Breast epithelium (tissue), 4 donors: ENCODE measurements at regions of chr18 and their contacts with region 1.

Region 1: DNA sequence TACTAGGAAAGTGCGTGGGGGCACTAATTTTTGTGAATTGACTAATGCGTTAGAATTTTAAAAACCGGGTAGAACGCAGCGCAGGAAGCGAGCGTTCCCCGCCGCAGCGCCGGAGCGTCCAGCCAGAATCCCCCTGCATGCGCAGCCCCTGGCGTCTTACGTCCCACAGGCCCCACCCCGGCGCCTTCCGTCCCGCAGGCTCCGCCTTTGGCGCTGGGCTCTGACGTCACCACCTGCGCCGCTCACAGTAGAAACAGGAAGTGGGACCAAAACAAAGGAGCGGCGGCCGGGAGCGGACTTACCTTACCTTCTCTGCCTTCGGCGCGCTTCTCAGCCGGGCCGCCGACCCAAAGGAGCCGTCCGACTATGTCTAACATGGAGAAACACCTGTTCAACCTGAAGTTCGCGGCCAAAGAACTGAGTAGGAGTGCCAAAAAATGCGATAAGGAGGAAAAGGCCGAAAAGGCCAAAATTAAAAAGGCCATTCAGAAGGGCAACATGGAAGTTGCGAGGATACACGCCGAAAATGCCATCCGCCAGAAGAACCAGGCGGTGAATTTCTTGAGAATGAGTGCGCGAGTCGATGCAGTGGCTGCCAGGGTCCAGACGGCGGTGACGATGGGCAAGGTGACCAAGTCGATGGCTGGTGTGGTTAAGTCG is at the start of gene CHMP1B:
- DNase-seq: peak; percentile 97 to 98
- H3K4me3 ChIP-seq: peak within 1 kb of the TSS; percentile 85 to 95 (median 90)
- H3K27ac ChIP-seq: peak within 1 kb of the TSS; percentile 94 to 99
- H3K4me1 ChIP-seq: peaks cover 0 to 5% of the 10 kb centered on the region in 2 donors
- H3K27me3 ChIP-seq: no peaks in the 10 kb centered on the region
- CTCF ChIP-seq: no peak
- POLR2A ChIP-seq: peak; percentile 96
- total RNA-seq, gene CHMP1B: 41.0 to 63.4 (median 44.8) TPM

Region 2: GRCh38 chr18:10473132-10473531 is 1378.1 kb before region 1 on chr18:
- intact Hi-C with region 1: loop called (anchors 5 kb)
- DNase-seq: no peak
- H3K4me3 ChIP-seq: no peak overlapping the region
- H3K27ac ChIP-seq: peak overlapping the region in 1 of 2 donors; percentile 26
- H3K4me1 ChIP-seq: peaks cover 0 to 14% of the 10 kb centered on the region in 2 donors
- H3K27me3 ChIP-seq: no peaks in the 10 kb centered on the region
- CTCF ChIP-seq: no peak
- POLR2A ChIP-seq: no peak

Region 3: GRCh38 chr18:12233378-12233777 is 382.1 kb after region 1 on chr18:
- intact Hi-C with region 1: no loop called
- DNase-seq: no peak
- H3K4me3 ChIP-seq: no peak overlapping the region
- H3K27ac ChIP-seq: no peak overlapping the region
- H3K4me1 ChIP-seq: no peaks in the 10 kb centered on the region
- H3K27me3 ChIP-seq: no peaks in the 10 kb centered on the region
- CTCF ChIP-seq: no peak
- POLR2A ChIP-seq: no peak